GM12878 (cell line): ENCODE measurements at regions of chr18 and their contacts with region 1.

Region 1: DNA sequence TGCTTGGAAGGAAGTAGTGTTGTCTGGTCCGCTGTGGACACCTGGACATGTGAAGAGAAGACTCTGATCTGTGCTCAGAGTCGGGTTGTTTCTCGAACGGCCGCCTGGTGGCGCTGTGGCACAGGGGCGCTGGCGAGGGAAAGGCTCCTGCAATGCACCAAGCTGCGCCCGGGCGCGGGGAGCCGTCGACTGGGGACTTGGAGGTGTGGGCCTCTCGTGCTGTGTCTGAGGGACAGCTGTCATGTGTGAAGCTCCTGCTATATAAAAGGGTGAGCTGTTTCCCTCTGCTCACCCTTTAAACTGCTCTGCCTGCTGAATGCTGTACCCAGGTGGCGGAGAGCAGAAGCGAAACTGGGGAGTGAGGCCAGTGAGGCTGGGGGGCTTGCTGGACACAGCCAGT is 44.0 kb downstream of the GNAL start:
- DNase-seq: no peak
- ATAC-seq: peak; percentile 97
- H3K4me3 ChIP-seq: no peak overlapping the region
- H3K27ac ChIP-seq: no peak overlapping the region
- H3K4me1 ChIP-seq: no peaks in the 10 kb centered on the region
- H3K27me3 ChIP-seq: no peaks in the 10 kb centered on the region; a peak in 2 of 4 replicates
- CTCF ChIP-seq: peak; percentile 82 to 92 (median 90)
- EP300 ChIP-seq: no peak
- POLR2A ChIP-seq: no peak
- RAD21 ChIP-seq: peak; percentile 78

Region 2: DNA sequence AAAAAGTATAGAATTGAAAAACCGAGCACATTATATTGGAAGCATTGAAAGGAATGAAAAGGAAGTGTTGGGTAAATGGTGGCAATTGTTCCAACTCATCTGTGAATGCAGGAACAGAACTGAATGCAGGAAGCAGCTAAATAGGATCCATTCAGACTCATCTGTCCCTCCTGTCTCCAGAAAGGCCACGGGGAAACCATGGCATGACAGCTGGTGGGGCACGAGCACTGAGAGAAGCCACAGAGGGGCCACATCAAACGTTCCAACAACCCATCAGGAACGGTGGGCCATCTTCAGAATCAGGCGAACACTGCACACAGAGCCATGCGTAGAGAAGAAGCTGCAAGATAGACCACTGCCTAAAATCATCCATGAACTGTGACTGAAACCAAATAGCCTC is 262.1 kb before region 1 on chr18:
- CTCF ChIA-PET with region 1: no interaction called
- POLR2A ChIA-PET with region 1: no interaction called
- RAD21 ChIA-PET with region 1: no interaction called
- SMC1A ChIA-PET with region 1: no interaction called
- in situ Hi-C with region 1: no loop called
- intact Hi-C with region 1: no loop called
- DNase-seq: no peak
- ATAC-seq: no peak
- H3K4me3 ChIP-seq: no peak overlapping the region
- H3K27ac ChIP-seq: no peak overlapping the region
- H3K4me1 ChIP-seq: no peaks in the 10 kb centered on the region
- H3K27me3 ChIP-seq: no peaks in the 10 kb centered on the region
- CTCF ChIP-seq: no peak
- EP300 ChIP-seq: no peak
- POLR2A ChIP-seq: no peak
- RAD21 ChIP-seq: no peak

Region 3: DNA sequence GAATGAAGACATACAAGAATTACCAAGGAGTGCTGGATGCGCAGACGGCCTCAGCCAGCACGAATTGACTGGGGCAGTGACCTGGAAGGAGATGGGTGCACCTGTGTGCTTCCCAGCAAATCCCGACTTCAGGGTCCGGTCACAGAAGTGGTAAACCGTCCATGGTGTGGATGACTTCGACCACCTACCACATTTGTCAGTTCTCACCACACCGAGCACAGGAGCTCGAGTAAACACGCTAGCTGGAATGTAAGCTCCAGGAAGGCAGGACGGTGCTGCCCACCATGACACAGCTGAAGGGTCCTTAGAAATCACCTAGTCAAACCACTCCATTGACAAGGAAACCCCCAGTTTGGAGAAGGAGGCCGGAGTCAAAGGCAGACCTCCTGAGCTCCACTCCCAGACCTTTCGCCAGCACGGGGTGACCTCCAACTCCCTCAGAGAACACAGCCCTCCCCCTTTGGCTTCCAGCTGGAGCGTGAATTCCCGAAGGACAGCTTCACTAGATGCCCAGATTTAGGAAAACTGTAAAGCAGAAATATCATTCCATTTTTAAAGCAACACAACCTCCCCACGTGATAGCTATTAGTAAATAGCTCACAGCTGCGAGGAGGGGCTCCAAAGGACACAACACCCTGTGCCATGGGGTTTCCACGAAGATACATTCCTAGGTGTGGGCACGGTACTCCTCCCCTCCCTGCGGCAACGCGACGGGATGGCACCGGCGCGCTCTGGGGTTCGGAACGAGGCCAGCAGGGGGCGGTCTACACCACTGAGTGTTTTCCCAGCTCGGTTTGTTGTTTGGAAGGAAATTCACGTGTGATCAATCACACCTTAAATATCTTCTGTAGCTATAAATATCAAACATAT is 78.1 kb before region 1 on chr18:
- CTCF ChIA-PET with region 1: interaction called, 15 read pairs
- POLR2A ChIA-PET with region 1: no interaction called
- RAD21 ChIA-PET with region 1: no interaction called
- SMC1A ChIA-PET with region 1: interaction called, 4 read pairs
- in situ Hi-C with region 1: no loop called
- intact Hi-C with region 1: loop called (anchors 5 kb)
- DNase-seq: no peak
- ATAC-seq: peak; percentile 80
- H3K4me3 ChIP-seq: no peak overlapping the region
- H3K27ac ChIP-seq: no peak overlapping the region
- H3K4me1 ChIP-seq: no peaks in the 10 kb centered on the region
- H3K27me3 ChIP-seq: peaks cover 2% of the 10 kb centered on the region in 2 experiments; a peak in 2 of 4 replicates
- CTCF ChIP-seq: peak; percentile 66 to 79 (median 71)
- EP300 ChIP-seq: no peak
- POLR2A ChIP-seq: no peak
- RAD21 ChIP-seq: peak; percentile 71

Region 4: DNA sequence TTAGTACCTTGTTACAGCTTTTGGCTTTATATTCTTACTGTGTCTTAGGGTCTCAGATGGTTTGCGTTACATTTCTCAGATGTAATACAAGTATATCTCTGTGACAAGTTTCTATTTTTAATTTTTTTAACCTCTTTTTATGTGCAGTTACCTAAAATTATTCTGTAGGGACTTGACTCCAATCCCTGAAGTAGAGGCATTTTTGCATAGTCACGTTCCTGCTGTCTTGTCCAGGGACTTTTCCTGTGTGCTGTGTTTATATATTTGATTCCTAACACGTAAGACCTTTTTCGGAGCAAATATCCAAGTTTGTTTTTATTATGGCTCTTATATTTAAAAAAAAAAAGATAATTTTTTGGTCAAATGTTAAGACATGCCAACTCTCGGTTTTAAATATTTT is 47.0 kb after region 1 on chr18:
- CTCF ChIA-PET with region 1: no interaction called
- POLR2A ChIA-PET with region 1: no interaction called
- RAD21 ChIA-PET with region 1: no interaction called
- SMC1A ChIA-PET with region 1: no interaction called
- in situ Hi-C with region 1: no loop called
- intact Hi-C with region 1: no loop called
- DNase-seq: no peak
- ATAC-seq: no peak
- H3K4me3 ChIP-seq: no peak overlapping the region
- H3K27ac ChIP-seq: no peak overlapping the region
- H3K4me1 ChIP-seq: no peaks in the 10 kb centered on the region
- H3K27me3 ChIP-seq: peaks cover 2 to 3% of the 10 kb centered on the region in 2 experiments; a peak in 3 of 4 replicates
- CTCF ChIP-seq: no peak
- EP300 ChIP-seq: no peak
- POLR2A ChIP-seq: no peak
- RAD21 ChIP-seq: no peak

Region 5: GRCh38 chr18:11872479-11873136 is 139.6 kb after region 1 on chr18:
- CTCF ChIA-PET with region 1: interaction called, 3 read pairs
- POLR2A ChIA-PET with region 1: no interaction called
- RAD21 ChIA-PET with region 1: interaction called, 3 read pairs
- SMC1A ChIA-PET with region 1: no interaction called
- in situ Hi-C with region 1: no loop called
- intact Hi-C with region 1: loop called (anchors 5 kb)
- DNase-seq: no peak
- ATAC-seq: peak; percentile 76
- H3K4me3 ChIP-seq: no peak overlapping the region
- H3K27ac ChIP-seq: no peak overlapping the region
- H3K4me1 ChIP-seq: no peaks in the 10 kb centered on the region
- H3K27me3 ChIP-seq: no peaks in the 10 kb centered on the region
- CTCF ChIP-seq: peak; percentile 28 to 50 (median 36); a peak in 4 of 6 replicates
- EP300 ChIP-seq: no peak
- POLR2A ChIP-seq: no peak
- RAD21 ChIP-seq: peak; percentile 54

Region 6: GRCh38 chr18:11937874-11938478 is 204.9 kb after region 1 on chr18:
- CTCF ChIA-PET with region 1: interaction called, 5 read pairs
- POLR2A ChIA-PET with region 1: no interaction called
- RAD21 ChIA-PET with region 1: no interaction called
- SMC1A ChIA-PET with region 1: interaction called, 3 read pairs
- in situ Hi-C with region 1: no loop called
- intact Hi-C with region 1: loop called (anchors 5 kb)
- DNase-seq: peak; percentile 23
- ATAC-seq: peak; percentile 84
- H3K4me3 ChIP-seq: no peak overlapping the region
- H3K27ac ChIP-seq: no peak overlapping the region
- H3K4me1 ChIP-seq: no peaks in the 10 kb centered on the region
- H3K27me3 ChIP-seq: no peaks in the 10 kb centered on the region
- CTCF ChIP-seq: peak; percentile 67 to 83 (median 69)
- EP300 ChIP-seq: no peak
- POLR2A ChIP-seq: no peak
- RAD21 ChIP-seq: peak; percentile 85

Region 7: GRCh38 chr18:11995445-11996189 is 262.6 kb after region 1 on chr18:
- CTCF ChIA-PET with region 1: interaction called, 10 read pairs
- POLR2A ChIA-PET with region 1: no interaction called
- RAD21 ChIA-PET with region 1: interaction called, 4 read pairs
- SMC1A ChIA-PET with region 1: interaction called, 4 read pairs
- in situ Hi-C with region 1: no loop called
- intact Hi-C with region 1: loop called (anchors 2 kb)
- DNase-seq: no peak
- ATAC-seq: peak; percentile 93
- H3K4me3 ChIP-seq: no peak overlapping the region
- H3K27ac ChIP-seq: no peak overlapping the region
- H3K4me1 ChIP-seq: peaks cover 8% of the 10 kb centered on the region
- H3K27me3 ChIP-seq: no peaks in the 10 kb centered on the region
- CTCF ChIP-seq: peak; percentile 80 to 90 (median 87)
- EP300 ChIP-seq: no peak
- POLR2A ChIP-seq: no peak
- RAD21 ChIP-seq: peak; percentile 88

Region 8: DNA sequence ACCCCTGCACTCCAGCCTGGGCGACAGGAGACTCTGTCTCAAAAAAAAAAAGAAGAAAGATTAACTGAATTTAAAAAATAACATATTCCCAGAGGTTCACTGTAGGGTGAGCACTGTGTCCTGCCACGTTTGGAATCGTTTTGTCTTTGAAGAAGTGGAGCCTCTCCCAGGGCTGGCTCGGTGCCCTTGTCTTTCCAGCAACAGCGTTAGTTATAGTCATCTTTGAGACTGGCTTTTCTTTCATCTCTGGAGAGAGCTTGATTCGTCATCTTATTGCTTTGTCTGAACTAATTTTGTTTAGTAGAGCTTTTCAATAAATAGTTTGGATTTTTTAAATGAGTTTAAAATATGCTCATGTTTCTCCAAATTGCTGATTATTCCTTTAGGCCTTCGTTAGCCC is 298.8 kb after region 1 on chr18:
- CTCF ChIA-PET with region 1: interaction called, 6 read pairs
- POLR2A ChIA-PET with region 1: no interaction called
- RAD21 ChIA-PET with region 1: no interaction called
- SMC1A ChIA-PET with region 1: no interaction called
- in situ Hi-C with region 1: loop called (anchors 5 kb)
- intact Hi-C with region 1: no loop called
- DNase-seq: no peak
- ATAC-seq: no peak
- H3K4me3 ChIP-seq: no peak overlapping the region
- H3K27ac ChIP-seq: no peak overlapping the region
- H3K4me1 ChIP-seq: no peaks in the 10 kb centered on the region
- H3K27me3 ChIP-seq: no peaks in the 10 kb centered on the region
- CTCF ChIP-seq: no peak
- EP300 ChIP-seq: no peak
- POLR2A ChIP-seq: no peak
- RAD21 ChIP-seq: no peak

Region 9: GRCh38 chr18:12038639-12039417 is 305.8 kb after region 1 on chr18:
- CTCF ChIA-PET with region 1: interaction called, 12 read pairs
- POLR2A ChIA-PET with region 1: no interaction called
- RAD21 ChIA-PET with region 1: interaction called, 6 read pairs
- SMC1A ChIA-PET with region 1: no interaction called
- in situ Hi-C with region 1: loop called (anchors 5 kb)
- intact Hi-C with region 1: loop called (anchors 1 kb)
- DNase-seq: no peak
- ATAC-seq: peak; percentile 97
- H3K4me3 ChIP-seq: peak overlapping the region; percentile 53; the same call in 1 of the 2 replicates
- H3K27ac ChIP-seq: no peak overlapping the region
- H3K4me1 ChIP-seq: peaks cover 5% of the 10 kb centered on the region
- H3K27me3 ChIP-seq: peaks cover 0 to 3% of the 10 kb centered on the region in 2 experiments; a peak in 2 of 4 replicates
- CTCF ChIP-seq: peak; percentile 95 to 99 (median 95); a peak in 5 of 6 replicates
- EP300 ChIP-seq: no peak
- POLR2A ChIP-seq: no peak
- RAD21 ChIP-seq: peak; percentile 83